ENCODE measurements at regions of chr7 and their contacts with region 1.

Region 1: DNA sequence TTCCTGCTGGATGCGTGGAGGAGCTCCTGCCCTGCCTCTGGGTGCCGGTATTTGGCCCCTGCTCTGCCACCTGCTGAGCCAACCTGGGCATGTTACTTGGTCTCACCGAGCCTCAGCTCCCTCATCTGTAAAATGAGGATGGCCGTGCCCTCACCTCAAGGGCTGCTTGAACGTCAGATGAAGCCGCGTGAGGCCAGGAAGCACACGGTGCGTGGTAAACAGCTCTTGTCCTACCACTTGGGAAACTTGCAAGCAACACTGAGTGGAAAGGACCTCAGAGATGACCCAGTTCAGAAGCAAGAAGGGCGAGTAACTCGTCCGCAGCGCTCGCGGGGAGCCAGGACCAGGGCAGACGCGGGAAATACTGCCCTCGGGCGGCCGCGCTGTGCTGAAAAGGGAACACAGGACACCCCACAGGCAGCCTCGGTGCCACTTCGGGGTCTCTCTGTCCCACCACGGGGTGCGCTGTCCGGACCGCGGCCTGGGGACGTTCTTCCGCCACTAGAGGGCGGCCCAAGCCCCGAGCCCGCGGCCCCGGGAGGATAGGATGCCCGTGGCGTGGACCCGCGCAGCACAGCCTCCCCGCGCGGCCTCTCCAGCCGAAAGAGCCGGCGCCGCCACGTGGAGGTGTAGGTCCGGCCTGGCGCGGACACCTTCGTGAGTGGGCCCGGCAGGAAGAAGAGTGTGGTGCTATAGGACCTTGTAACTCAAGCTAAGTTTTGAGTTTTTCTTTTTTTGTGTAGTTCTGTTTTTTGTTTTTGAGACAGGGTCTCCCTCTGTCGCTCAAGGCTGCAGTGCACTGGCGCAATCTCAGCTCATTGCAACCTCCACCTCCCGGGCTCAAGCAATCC is 94.1 kb downstream of the PRKAG2 start:
- DNase-seq: peak; percentile 58 to 92
- H3K4me3 ChIP-seq: peak overlapping the region in 2 of 4 experiments; percentile 7 to 48; a peak in 2 of 8 replicates
- H3K27ac ChIP-seq: no peak overlapping the region
- H3K4me1 ChIP-seq: peaks cover 0 to 4% (median 1%) of the 10 kb centered on the region in 4 experiments; a peak in 2 of 7 replicates
- H3K27me3 ChIP-seq: peaks cover 0 to 6% (median 3%) of the 10 kb centered on the region in 4 experiments; a peak in 4 of 7 replicates
- CTCF ChIP-seq: peak; percentile 84 to 99 (median 95)
- EP300 ChIP-seq: peak in 1 of 2 experiments; percentile 15; a peak in 1 of 3 replicates
- POLR2A ChIP-seq: no peak
- RAD21 ChIP-seq: peak; percentile 62 to 77

Region 2: DNA sequence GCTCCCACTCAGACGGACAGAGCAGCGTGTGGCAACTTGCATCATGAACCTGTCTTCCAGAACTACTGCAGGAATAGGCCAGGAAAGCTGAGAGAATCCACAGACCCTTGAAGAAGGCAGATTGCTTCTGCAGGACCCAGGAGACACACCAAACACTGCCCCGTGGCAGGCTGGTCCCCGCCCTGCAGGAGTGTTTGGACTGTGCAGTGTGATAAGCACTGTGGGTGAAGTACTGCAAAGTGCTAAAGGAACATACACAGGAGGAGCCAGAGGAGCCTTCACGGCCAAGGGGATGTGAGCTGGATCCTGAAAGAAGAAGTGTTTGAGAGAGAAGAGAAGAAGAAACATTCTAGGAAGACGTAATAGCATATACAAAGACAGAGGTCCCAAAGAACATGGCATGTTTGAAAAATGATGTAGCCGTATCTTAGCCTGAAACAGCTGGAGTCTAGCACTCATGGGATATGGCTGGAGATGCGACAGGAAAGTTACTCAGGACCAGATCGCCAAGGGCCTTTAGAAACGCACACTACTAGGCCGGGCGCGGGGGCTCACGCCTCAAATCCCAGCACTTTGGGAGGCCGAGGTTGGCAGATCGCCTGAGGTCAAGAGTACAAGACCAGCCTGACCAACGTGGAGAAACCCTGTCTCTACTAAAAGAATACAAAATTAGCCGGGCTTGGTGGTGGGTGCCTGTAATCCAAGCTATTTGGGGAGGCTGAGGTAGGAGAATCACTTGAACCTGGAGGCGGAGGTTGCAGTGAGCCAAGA is 166.2 kb before region 1 on chr7:
- CTCF ChIA-PET with region 1: interaction called, 10 read pairs
- POLR2A ChIA-PET with region 1: no interaction called
- DNase-seq: no peak
- H3K4me3 ChIP-seq: no peak overlapping the region
- H3K27ac ChIP-seq: no peak overlapping the region
- H3K4me1 ChIP-seq: no peaks in the 10 kb centered on the region
- H3K27me3 ChIP-seq: no peaks in the 10 kb centered on the region
- CTCF ChIP-seq: no peak
- EP300 ChIP-seq: no peak
- POLR2A ChIP-seq: no peak
- RAD21 ChIP-seq: no peak

Region 3: GRCh38 chr7:151795168-151795811 is 12.5 kb after region 1 on chr7:
- CTCF ChIA-PET with region 1: interaction called, 57 read pairs
- POLR2A ChIA-PET with region 1: interaction called, 3 read pairs
- DNase-seq: no peak
- H3K4me3 ChIP-seq: no peak overlapping the region
- H3K27ac ChIP-seq: no peak overlapping the region
- H3K4me1 ChIP-seq: peaks cover 0 to 10% (median 6%) of the 10 kb centered on the region in 4 experiments; a peak in 3 of 7 replicates
- H3K27me3 ChIP-seq: no peaks in the 10 kb centered on the region
- CTCF ChIP-seq: no peak
- EP300 ChIP-seq: no peak
- POLR2A ChIP-seq: no peak
- RAD21 ChIP-seq: no peak

Region 4: DNA sequence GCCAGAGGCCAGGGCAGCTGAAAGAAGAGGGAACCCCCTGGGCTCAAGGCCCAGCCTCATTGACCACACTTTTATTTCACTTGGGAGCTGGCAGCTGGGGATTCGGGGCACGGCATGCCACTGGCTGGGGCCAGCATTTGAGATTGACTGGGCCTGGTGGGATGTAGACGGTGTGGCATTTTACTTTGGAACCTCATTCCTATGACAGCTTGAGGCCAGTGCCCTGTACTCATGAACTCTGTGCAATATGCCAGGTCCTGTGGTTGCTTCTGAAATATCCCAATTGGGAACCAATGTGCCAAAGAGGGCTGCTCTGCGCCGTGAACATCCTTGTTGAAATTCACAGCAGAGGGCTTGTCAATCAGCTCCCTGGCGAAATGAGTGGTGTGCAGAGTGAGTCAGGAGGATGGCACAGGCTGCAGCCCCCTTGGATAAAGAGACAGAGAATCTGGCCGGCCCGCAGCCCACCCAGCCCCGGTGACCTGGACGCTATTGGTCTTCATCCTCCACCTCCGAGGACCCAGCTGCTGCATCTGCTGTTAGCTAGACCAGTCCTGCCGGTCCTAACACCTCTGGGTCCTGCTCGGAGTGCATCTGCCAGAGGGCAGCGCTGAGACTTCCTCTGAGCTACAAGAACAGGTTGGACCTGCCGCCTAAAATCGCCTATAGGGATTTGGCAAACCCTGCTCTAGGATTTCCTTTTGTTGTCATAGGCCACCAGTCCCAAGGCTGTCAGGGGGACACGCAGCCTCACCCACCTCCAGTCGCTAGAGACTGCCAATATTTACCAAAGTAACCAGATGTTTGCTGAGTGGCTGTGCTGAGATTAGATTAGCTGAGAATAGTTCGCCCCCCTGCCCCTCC is 36.1 kb after region 1 on chr7:
- CTCF ChIA-PET with region 1: interaction called, 16 read pairs
- POLR2A ChIA-PET with region 1: no interaction called
- DNase-seq: no peak
- H3K4me3 ChIP-seq: no peak overlapping the region
- H3K27ac ChIP-seq: no peak overlapping the region
- H3K4me1 ChIP-seq: peaks cover 9 to 19% (median 13%) of the 10 kb centered on the region in 4 experiments
- H3K27me3 ChIP-seq: peaks cover 0 to 18% (median 0%) of the 10 kb centered on the region in 4 experiments; a peak in 3 of 7 replicates
- CTCF ChIP-seq: peak; percentile 23 to 32 (median 27); a peak in 3 of 4 replicates
- EP300 ChIP-seq: no peak
- POLR2A ChIP-seq: no peak
- RAD21 ChIP-seq: peak; percentile 16 to 37; a peak in 3 of 4 replicates

Region 5: DNA sequence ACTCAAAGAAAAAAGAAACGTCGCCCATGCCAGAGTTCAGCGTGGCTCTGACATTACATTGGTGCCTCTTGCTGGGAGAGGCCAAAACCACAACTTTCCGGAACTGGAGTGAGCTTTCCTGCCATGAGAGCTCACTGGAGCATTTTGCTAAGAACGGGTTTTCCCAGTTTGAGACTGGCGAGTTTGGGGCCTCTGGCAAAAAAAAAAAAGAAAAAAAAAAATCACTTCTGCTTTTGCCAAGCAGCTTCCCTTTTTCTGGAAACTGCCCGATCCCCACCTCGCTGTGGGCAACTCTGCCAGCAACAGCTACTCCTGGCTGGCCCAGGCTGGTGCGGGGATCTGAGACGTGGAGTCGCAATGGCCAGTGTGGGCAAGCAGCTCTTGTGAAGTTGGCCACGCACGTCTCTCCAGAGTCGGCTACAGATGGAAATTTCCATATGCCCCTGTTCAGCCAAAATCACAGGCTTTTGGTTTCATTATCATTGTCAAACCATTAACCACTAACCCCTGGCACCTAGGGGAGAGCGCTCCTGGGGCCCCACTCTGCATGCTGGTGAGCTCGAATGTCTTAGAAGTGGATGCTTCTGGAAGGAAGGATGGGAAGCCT is 68.4 kb after region 1 on chr7:
- CTCF ChIA-PET with region 1: no interaction called
- POLR2A ChIA-PET with region 1: no interaction called
- DNase-seq: no peak
- H3K4me3 ChIP-seq: no peak overlapping the region
- H3K27ac ChIP-seq: no peak overlapping the region
- H3K4me1 ChIP-seq: peaks cover 0 to 3% (median 0%) of the 10 kb centered on the region in 4 experiments; a peak in 1 of 7 replicates
- H3K27me3 ChIP-seq: no peaks in the 10 kb centered on the region
- CTCF ChIP-seq: no peak
- EP300 ChIP-seq: no peak
- POLR2A ChIP-seq: no peak
- RAD21 ChIP-seq: no peak

Measured in H1 (cell line).